GM12878 (cell line): ENCODE measurements at regions of chr11 and their contacts with region 1.

Region 1: GRCh38 chr11:32176223-32176934 is 85.5 kb downstream of the RCN1 start:
- DNase-seq: peak; percentile 64
- ATAC-seq: peak; percentile 88
- H3K4me3 ChIP-seq: no peak overlapping the region
- H3K27ac ChIP-seq: no peak overlapping the region
- H3K4me1 ChIP-seq: no peaks in the 10 kb centered on the region; the same call in 1 of the 2 replicates
- H3K27me3 ChIP-seq: no peaks in the 10 kb centered on the region
- CTCF ChIP-seq: peak; percentile 74 to 96 (median 77)
- EP300 ChIP-seq: no peak
- POLR2A ChIP-seq: no peak
- RAD21 ChIP-seq: peak; percentile 99

Region 2: GRCh38 chr11:31214372-31214771 is 962.0 kb before region 1 on chr11:
- CTCF ChIA-PET with region 1: no interaction called
- POLR2A ChIA-PET with region 1: no interaction called
- RAD21 ChIA-PET with region 1: no interaction called
- SMC1A ChIA-PET with region 1: no interaction called
- in situ Hi-C with region 1: no loop called
- intact Hi-C with region 1: no loop called
- DNase-seq: no peak
- ATAC-seq: no peak
- H3K4me3 ChIP-seq: no peak overlapping the region
- H3K27ac ChIP-seq: no peak overlapping the region
- H3K4me1 ChIP-seq: no peaks in the 10 kb centered on the region
- H3K27me3 ChIP-seq: no peaks in the 10 kb centered on the region
- CTCF ChIP-seq: no peak
- EP300 ChIP-seq: no peak
- POLR2A ChIP-seq: no peak
- RAD21 ChIP-seq: no peak

Region 3: GRCh38 chr11:31340903-31341572 is 835.3 kb before region 1 on chr11:
- CTCF ChIA-PET with region 1: interaction called, 9 read pairs
- POLR2A ChIA-PET with region 1: no interaction called
- RAD21 ChIA-PET with region 1: interaction called, 8 read pairs
- SMC1A ChIA-PET with region 1: interaction called, 5 read pairs
- in situ Hi-C with region 1: no loop called
- intact Hi-C with region 1: loop called (anchors 5 kb)
- DNase-seq: no peak
- ATAC-seq: peak; percentile 69
- H3K4me3 ChIP-seq: no peak overlapping the region
- H3K27ac ChIP-seq: no peak overlapping the region
- H3K4me1 ChIP-seq: no peaks in the 10 kb centered on the region
- H3K27me3 ChIP-seq: no peaks in the 10 kb centered on the region
- CTCF ChIP-seq: peak; percentile 46 to 71 (median 70); a peak in 5 of 6 replicates
- EP300 ChIP-seq: no peak
- POLR2A ChIP-seq: no peak
- RAD21 ChIP-seq: peak; percentile 55

Region 4: DNA sequence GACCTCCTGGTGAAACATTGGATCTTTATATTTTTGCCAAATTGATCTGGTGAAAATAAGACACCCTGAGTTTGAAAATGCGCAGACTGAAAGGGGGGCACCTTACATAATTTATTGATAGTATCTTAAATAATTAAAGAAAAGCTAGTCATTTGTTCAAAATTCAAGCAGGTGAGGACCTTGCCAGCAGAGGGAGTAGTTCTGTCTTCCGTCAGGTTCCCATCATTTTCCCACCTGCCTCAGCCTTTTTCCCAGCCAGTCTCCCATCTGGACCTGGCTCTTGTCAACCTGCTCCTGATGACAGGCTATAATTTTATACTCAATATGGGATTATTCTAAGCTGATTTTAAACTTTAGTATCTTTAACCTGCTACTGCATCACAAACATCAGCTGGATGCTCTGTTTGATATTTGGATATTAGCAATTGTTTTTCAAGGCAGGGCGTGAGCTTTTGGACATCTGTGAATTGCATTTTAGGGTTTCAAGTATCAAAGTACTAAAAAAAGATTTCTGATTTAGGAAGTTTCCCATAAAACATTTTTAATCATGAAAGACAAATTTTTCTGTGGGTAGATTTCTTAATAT is 534.8 kb before region 1 on chr11:
- CTCF ChIA-PET with region 1: interaction called, 27 read pairs
- POLR2A ChIA-PET with region 1: no interaction called
- RAD21 ChIA-PET with region 1: interaction called, 8 read pairs
- SMC1A ChIA-PET with region 1: interaction called, 6 read pairs
- in situ Hi-C with region 1: no loop called
- intact Hi-C with region 1: loop called (anchors 10 kb)
- DNase-seq: no peak
- ATAC-seq: no peak
- H3K4me3 ChIP-seq: no peak overlapping the region
- H3K27ac ChIP-seq: no peak overlapping the region
- H3K4me1 ChIP-seq: no peaks in the 10 kb centered on the region
- H3K27me3 ChIP-seq: no peaks in the 10 kb centered on the region
- CTCF ChIP-seq: peak; percentile 54 to 61 (median 56)
- EP300 ChIP-seq: no peak
- POLR2A ChIP-seq: no peak
- RAD21 ChIP-seq: peak; percentile 32

Region 5: GRCh38 chr11:32044158-32044863 is 132.1 kb before region 1 on chr11:
- CTCF ChIA-PET with region 1: interaction called, 306 read pairs
- POLR2A ChIA-PET with region 1: no interaction called
- RAD21 ChIA-PET with region 1: interaction called, 50 read pairs
- SMC1A ChIA-PET with region 1: interaction called, 205 read pairs
- in situ Hi-C with region 1: no loop called
- intact Hi-C with region 1: no loop called
- DNase-seq: no peak
- ATAC-seq: no peak
- H3K4me3 ChIP-seq: no peak overlapping the region
- H3K27ac ChIP-seq: no peak overlapping the region
- H3K4me1 ChIP-seq: no peaks in the 10 kb centered on the region
- H3K27me3 ChIP-seq: no peaks in the 10 kb centered on the region
- CTCF ChIP-seq: no peak
- EP300 ChIP-seq: no peak
- POLR2A ChIP-seq: no peak
- RAD21 ChIP-seq: no peak

Region 6: GRCh38 chr11:32148881-32149389 is 27.4 kb before region 1 on chr11:
- CTCF ChIA-PET with region 1: interaction called, 23 read pairs
- POLR2A ChIA-PET with region 1: no interaction called
- RAD21 ChIA-PET with region 1: interaction called, 9 read pairs
- SMC1A ChIA-PET with region 1: interaction called, 11 read pairs
- in situ Hi-C with region 1: no loop called
- intact Hi-C with region 1: no loop called
- DNase-seq: no peak
- ATAC-seq: no peak
- H3K4me3 ChIP-seq: no peak overlapping the region
- H3K27ac ChIP-seq: no peak overlapping the region
- H3K4me1 ChIP-seq: peaks cover 2% of the 10 kb centered on the region; the same call in 1 of the 2 replicates
- H3K27me3 ChIP-seq: no peaks in the 10 kb centered on the region
- CTCF ChIP-seq: no peak
- EP300 ChIP-seq: no peak
- POLR2A ChIP-seq: no peak
- RAD21 ChIP-seq: no peak

Region 7: GRCh38 chr11:32297611-32298011 is 121.2 kb after region 1 on chr11:
- CTCF ChIA-PET with region 1: interaction called, 25 read pairs
- POLR2A ChIA-PET with region 1: no interaction called
- RAD21 ChIA-PET with region 1: interaction called, 3 read pairs
- SMC1A ChIA-PET with region 1: interaction called, 4 read pairs
- in situ Hi-C with region 1: no loop called
- intact Hi-C with region 1: no loop called
- DNase-seq: no peak
- ATAC-seq: peak; percentile 64
- H3K4me3 ChIP-seq: no peak overlapping the region
- H3K27ac ChIP-seq: no peak overlapping the region
- H3K4me1 ChIP-seq: no peaks in the 10 kb centered on the region
- H3K27me3 ChIP-seq: no peaks in the 10 kb centered on the region; a peak in 2 of 4 replicates
- CTCF ChIP-seq: peak; percentile 5 to 37 (median 26); a peak in 1 of 6 replicates
- EP300 ChIP-seq: no peak
- POLR2A ChIP-seq: no peak
- RAD21 ChIP-seq: peak; percentile 37

Region 8: DNA sequence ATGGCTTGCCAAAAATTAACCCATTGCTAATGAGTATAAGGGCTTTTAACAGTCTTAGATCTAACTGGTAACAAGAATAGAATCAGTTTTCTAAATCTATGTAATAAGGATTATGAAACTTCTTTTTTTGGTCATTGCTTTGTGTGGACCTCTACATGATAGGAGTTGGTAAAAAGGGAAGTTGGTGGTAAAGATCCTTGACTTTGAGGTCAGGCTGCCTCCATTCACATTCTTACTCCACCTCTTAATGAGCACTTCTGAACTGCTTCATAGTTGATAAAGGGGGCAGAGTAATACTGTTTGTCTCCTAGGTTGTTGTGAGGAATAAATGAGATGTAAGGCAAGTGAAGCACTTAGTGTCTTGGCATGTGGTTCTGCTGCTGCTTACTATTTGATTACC is 417.9 kb after region 1 on chr11:
- CTCF ChIA-PET with region 1: no interaction called
- POLR2A ChIA-PET with region 1: no interaction called
- RAD21 ChIA-PET with region 1: no interaction called
- SMC1A ChIA-PET with region 1: no interaction called
- in situ Hi-C with region 1: no loop called
- intact Hi-C with region 1: no loop called
- DNase-seq: no peak
- ATAC-seq: peak; percentile 80
- H3K4me3 ChIP-seq: no peak overlapping the region
- H3K27ac ChIP-seq: no peak overlapping the region; the same call in 1 of the 2 replicates
- H3K4me1 ChIP-seq: no peaks in the 10 kb centered on the region
- H3K27me3 ChIP-seq: no peaks in the 10 kb centered on the region
- CTCF ChIP-seq: no peak
- EP300 ChIP-seq: no peak
- POLR2A ChIP-seq: no peak
- RAD21 ChIP-seq: no peak